ENCODE measurements at regions of chr21 and their contacts with region 1.

Region 1: GRCh38 chr21:39004634-39005501 is 178.4 kb downstream of the PSMG1 start:
- DNase-seq: peak; percentile 88

Region 2: DNA sequence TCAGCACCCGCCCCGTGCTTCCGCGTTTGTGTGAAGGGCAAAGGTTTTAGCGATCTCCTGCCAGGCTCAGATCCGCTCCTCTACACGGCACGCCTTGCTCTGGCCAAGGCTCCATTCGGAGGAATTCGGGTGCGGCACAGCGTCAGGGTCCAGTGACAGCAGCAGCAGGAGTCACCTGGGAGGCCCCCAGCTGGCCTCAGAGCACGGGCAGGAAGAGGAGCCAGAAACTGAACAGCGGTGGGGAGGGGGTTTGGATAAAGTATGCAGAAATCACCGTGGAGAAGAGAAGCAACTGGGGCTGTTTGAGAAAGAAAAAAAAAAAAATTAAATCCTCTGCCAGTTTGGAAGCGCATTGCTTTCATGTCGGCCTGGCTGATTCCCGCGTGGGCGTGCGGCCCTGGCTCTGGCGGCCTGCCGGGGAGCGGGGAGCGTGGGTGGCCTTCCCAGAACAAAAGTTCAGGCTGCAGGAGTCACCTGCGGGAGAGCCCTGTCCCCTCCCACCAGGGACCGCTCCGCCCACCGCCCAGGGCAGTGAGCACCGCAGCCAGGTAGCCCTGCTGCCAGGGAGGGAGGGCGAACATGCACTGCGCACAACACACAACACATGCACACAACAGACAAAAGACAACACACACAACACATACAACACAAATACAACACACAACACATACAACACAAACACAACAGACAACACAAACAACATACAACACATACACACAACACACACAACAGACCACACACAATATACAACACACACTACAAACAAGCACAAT is 91.6 kb before region 1 on chr21:
- intact Hi-C with region 1: loop called (anchors 5 kb)
- DNase-seq: peak; percentile 88

Region 3: DNA sequence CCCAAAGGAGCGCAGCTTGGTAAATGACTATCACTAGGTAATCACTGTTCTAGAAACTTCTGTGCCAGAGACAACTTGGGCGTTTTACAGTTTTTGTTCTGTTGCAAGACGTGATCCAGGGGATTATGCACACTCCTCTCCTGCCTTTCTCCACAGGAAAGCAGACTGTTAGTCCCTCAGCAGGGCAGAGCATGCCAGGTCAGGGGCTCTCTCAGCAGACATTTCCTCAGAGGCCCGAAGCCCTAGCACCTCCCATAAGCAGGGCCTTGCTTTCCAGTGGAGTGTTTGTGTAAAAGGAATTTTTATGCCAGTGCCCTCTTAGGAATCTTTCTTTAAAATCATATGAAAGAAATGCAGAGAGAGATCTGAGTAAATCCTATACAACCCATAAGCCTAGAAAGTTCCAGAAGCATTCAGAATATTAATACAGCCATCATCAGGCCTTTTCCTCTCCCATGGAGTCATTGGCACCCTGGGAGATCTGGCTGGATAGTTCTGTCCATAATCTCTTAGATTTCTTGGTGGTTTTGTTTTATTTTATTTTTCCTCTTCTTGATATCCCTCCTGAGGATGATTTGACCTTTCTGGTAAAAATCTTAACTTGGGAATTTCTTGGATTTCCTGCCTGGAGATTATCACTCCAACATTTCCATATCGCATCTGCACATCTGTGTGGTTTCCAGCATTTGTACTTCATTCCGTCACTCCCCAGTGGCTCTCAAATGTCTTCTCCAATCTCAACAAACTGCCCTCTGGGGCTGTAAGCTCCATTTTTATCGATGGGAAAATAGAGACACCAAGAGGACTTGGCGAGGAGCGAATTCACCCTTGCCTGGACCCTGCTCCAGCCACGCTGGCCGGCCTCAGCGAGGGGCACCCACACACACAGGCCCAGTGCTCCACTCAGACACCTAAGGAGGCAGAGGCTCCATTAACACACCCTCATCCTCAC is 62.2 kb after region 1 on chr21:
- intact Hi-C with region 1: loop called (anchors 5 kb)
- DNase-seq: no peak

Region 4: DNA sequence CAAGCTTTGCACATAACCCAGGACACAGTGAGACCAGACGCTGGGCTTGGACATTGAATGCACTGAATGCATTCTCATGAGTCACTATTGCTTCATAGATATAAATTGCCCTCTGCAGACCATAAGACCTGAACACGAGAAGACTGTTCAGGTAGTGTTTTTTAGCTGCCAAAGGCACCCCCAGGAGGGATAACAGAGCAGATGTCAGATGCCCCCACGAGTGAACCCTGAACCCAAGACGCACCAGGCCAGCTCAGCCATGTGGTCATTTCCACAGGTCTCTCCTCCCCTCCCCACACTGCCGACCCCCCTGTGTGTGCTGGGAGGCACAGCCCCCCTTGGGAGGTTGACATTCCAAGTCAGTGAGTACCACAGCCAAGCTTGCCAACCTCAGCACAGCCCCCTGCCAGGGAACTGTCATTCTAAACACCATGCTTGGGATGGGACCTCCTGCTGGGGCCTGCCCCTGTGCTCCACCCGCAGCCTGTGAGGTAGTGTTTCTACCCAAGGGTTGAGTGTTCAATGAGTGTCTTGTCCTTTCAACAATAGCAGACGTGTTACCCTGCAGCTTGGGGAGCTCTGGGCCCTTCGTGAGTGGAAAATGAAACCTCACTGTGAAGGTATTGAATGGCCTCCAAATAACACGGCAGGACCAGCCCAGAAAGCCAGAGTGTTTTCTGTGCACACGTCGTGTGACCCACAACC is 110.2 kb after region 1 on chr21:
- intact Hi-C with region 1: loop called (anchors 5 kb)
- DNase-seq: no peak

Measured in cardiac septum (tissue), 1 donor.